Vagina (tissue), 2 donors: ENCODE measurements at regions of chr6 and their contacts with region 1.

Region 1: GRCh38 chr6:157274471-157275226 is 48.7 kb downstream of the TMEM242 start:
- DNase-seq: peak in 1 of 2 donors; percentile 85
- H3K4me3 ChIP-seq: peak overlapping the region; percentile 53 to 57
- H3K27ac ChIP-seq: peak overlapping the region; percentile 89
- H3K4me1 ChIP-seq: peaks cover 33% of the 10 kb centered on the region
- H3K27me3 ChIP-seq: no peaks in the 10 kb centered on the region
- CTCF ChIP-seq: peak; percentile 40 to 79 (median 54)
- POLR2A ChIP-seq: no peak

Region 2: GRCh38 chr6:157045831-157046454 is 228.7 kb before region 1 on chr6:
- intact Hi-C with region 1: loop called (anchors 10 kb)
- DNase-seq: no peak
- H3K4me3 ChIP-seq: no peak overlapping the region
- H3K27ac ChIP-seq: no peak overlapping the region
- H3K4me1 ChIP-seq: peaks cover 37% of the 10 kb centered on the region
- H3K27me3 ChIP-seq: no peaks in the 10 kb centered on the region
- CTCF ChIP-seq: peak in 1 of 3 experiments; percentile 26
- POLR2A ChIP-seq: no peak

Region 3: GRCh38 chr6:157235600-157236039 is 39.0 kb before region 1 on chr6:
- intact Hi-C with region 1: loop called (anchors 2 kb)
- DNase-seq: no peak
- H3K4me3 ChIP-seq: peak overlapping the region; percentile 56 to 78
- H3K27ac ChIP-seq: peak overlapping the region; percentile 72
- H3K4me1 ChIP-seq: peaks cover 37% of the 10 kb centered on the region
- H3K27me3 ChIP-seq: no peaks in the 10 kb centered on the region
- CTCF ChIP-seq: peak in 2 of 3 experiments; percentile 42 to 51
- POLR2A ChIP-seq: peak in 1 of 2 donors; percentile 20

Region 4: DNA sequence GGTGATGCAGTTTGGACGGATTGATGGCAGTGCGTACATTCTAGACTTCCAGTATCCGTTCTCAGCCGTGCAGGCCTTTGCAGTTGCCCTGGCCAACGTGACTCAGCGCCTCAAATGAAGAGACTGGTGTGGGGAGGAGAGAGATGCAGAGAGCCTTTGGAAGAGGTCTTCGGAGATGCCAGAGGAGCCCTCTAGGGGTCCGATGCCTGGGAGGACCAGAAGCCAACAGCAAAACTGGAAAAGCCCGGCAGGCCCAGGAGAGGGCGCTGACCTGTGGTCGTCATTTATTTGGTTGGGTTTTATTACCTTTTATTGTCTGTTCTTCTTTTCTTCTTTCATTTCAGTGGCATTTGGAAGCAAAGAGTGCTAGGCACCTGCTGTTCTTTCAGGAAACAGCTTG is 1231.9 kb after region 1 on chr6:
- intact Hi-C with region 1: no loop called
- DNase-seq: no peak
- H3K4me3 ChIP-seq: no peak overlapping the region
- H3K27ac ChIP-seq: no peak overlapping the region
- H3K4me1 ChIP-seq: no peaks in the 10 kb centered on the region
- H3K27me3 ChIP-seq: no peaks in the 10 kb centered on the region
- CTCF ChIP-seq: no peak
- POLR2A ChIP-seq: no peak